HEK293 (cell line): ENCODE measurements at regions of chr11 and their contacts with region 1.

Region 1: DNA sequence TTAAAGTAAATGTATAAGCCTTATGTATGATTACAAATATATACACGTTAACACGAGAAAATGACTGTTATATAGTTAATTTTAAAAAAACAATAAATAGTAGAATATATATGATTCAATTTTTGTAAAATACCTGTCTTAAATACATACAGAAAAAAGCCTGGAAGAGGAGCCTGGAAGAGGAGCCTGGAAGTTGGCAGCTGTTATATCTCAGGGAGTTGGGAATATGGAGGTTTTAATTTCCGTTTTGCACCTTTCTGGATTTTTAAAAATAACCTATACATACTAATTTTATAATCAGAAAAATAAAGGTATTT is 111.6 kb downstream of the WT1 start:
- H3K4me3 ChIP-seq: no peak overlapping the region
- H3K27ac ChIP-seq: no peak overlapping the region
- H3K4me1 ChIP-seq: no peaks in the 10 kb centered on the region
- CTCF ChIP-seq: no peak

Region 2: GRCh38 chr11:32176223-32176934 is 147.4 kb before region 1 on chr11:
- CTCF ChIA-PET with region 1: no interaction called
- POLR2A ChIA-PET with region 1: no interaction called
- H3K4me3 ChIP-seq: no peak overlapping the region
- H3K27ac ChIP-seq: no peak overlapping the region
- H3K4me1 ChIP-seq: no peaks in the 10 kb centered on the region
- CTCF ChIP-seq: 0 out of 2 replicates have a peak, but pooled peaks have one; percentile 36

Region 3: DNA sequence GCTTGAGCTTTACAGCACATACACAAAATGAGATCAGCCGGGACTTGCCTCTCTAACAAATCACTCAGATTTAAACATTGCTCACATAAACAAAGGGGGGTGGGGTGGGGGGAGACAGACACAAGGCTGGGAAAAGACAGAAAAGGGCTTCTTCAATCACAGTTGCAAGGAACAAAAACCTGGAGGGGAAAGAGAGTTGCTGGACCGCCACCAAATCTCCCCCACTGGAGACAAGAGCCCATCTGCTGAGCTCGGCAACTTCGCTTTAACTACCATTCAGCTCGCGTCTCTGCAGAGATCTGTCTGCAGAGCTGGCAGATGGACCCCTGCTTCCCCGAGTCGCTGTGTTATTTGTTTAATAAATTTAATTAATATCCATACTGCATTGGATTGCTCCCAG is 67.9 kb before region 1 on chr11:
- CTCF ChIA-PET with region 1: interaction called, 10 read pairs
- POLR2A ChIA-PET with region 1: no interaction called
- H3K4me3 ChIP-seq: no peak overlapping the region
- H3K27ac ChIP-seq: no peak overlapping the region
- H3K4me1 ChIP-seq: no peaks in the 10 kb centered on the region
- CTCF ChIP-seq: no peak

Region 4: DNA sequence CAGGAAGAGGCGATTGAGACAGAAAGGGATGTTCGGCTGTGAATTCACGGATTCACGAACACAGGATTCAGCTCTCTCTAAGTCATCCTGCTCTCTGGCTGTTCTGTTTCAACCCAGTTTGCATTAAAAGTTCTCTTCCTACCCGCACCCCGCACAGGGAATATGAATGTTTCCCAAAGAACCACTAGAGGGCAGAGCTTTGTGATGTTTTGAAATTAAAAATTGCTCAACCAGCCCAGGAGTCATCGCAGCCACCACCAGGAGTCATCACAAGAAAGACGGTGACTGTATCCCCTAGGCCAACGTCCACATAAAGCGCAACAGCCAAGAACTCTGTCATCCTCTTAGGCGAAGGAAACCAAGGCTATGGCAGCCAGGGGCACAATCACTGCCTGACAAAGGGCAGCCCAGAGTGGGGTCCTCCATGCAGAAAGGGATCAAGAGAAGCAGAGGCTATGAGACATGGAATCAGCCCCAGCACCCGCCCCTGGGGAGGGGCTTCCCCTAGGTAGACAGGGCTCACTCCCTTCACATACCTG is 10.8 kb before region 1 on chr11:
- CTCF ChIA-PET with region 1: interaction called, 32 read pairs
- POLR2A ChIA-PET with region 1: no interaction called
- H3K4me3 ChIP-seq: no peak overlapping the region
- H3K27ac ChIP-seq: no peak overlapping the region
- H3K4me1 ChIP-seq: peaks cover 19% of the 10 kb centered on the region
- CTCF ChIP-seq: peak; percentile 70

Region 5: GRCh38 chr11:32385998-32386397 is 62.2 kb after region 1 on chr11:
- CTCF ChIA-PET with region 1: interaction called, 13 read pairs
- POLR2A ChIA-PET with region 1: no interaction called
- H3K4me3 ChIP-seq: no peak overlapping the region
- H3K27ac ChIP-seq: no peak overlapping the region
- H3K4me1 ChIP-seq: no peaks in the 10 kb centered on the region; the same call in 1 of the 2 replicates
- CTCF ChIP-seq: no peak